Activated CD4-positive, alpha-beta T cell treated with anti-CD3 and anti-CD28 coated beads, Interleukin-2, amount 10 ng/mL, durations not matched to agents 24 days and 14 days (primary cell): ENCODE measurements at regions of chr14 and their contacts with region 1.

Region 1: DNA sequence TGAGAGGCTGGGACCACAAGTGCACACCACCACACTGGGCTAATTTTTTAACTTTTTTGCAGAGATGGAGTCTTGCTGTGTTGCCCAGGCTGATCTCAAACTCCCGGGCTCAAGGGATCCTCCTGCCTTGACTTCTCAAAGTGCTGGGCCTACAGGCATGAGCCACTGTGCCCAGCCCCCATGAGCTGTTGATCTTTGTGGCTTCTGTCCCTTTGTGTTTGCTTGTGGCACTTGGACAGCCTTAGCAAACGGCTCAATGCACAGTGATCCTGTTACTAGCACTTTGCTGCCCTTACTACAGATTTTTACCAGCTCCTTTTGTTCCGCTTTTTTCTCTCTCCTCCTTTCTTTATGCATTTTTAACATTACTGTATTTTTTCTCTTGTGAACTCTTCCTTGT is 25.3 kb upstream of the EVL start:
- DNase-seq: no peak
- H3K4me3 Mint-ChIP-seq: no peak overlapping the region
- H3K27ac Mint-ChIP-seq: no peak overlapping the region
- H3K4me1 Mint-ChIP-seq: peaks cover 7% of the 10 kb centered on the region
- H3K27me3 Mint-ChIP-seq: no peaks in the 10 kb centered on the region

Region 2: GRCh38 chr14:99989032-99989431 is 50.9 kb before region 1 on chr14:
- intact Hi-C with region 1: loop called (anchors 2 kb)
- DNase-seq: no peak
- H3K4me3 Mint-ChIP-seq: no peak overlapping the region
- H3K27ac Mint-ChIP-seq: no peak overlapping the region
- H3K4me1 Mint-ChIP-seq: no peaks in the 10 kb centered on the region
- H3K27me3 Mint-ChIP-seq: peaks cover 16% of the 10 kb centered on the region

Region 3: DNA sequence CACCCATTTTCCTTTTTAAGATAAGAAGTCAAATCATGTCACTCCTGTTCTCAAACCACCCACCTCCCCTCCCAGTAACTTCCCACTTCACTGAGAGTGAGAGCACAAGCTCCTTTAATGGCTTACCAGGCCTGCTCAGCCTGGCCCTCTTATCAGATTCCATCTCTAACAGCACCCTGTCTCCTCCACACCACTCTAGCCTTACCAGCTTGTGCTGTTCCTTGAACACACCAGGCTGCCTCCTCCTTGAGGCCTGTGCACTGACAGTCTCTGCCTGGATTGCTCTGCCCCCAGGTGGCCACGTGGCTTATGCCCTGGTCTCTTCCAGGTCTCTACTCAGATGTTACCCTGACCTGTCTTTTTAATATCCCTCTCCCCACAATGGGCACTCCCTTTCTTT is 14.8 kb before region 1 on chr14:
- intact Hi-C with region 1: no loop called
- DNase-seq: peak; percentile 74
- H3K4me3 Mint-ChIP-seq: no peak overlapping the region
- H3K27ac Mint-ChIP-seq: peak overlapping the region; percentile 28
- H3K4me1 Mint-ChIP-seq: peaks cover 15% of the 10 kb centered on the region
- H3K27me3 Mint-ChIP-seq: no peaks in the 10 kb centered on the region

Region 4: DNA sequence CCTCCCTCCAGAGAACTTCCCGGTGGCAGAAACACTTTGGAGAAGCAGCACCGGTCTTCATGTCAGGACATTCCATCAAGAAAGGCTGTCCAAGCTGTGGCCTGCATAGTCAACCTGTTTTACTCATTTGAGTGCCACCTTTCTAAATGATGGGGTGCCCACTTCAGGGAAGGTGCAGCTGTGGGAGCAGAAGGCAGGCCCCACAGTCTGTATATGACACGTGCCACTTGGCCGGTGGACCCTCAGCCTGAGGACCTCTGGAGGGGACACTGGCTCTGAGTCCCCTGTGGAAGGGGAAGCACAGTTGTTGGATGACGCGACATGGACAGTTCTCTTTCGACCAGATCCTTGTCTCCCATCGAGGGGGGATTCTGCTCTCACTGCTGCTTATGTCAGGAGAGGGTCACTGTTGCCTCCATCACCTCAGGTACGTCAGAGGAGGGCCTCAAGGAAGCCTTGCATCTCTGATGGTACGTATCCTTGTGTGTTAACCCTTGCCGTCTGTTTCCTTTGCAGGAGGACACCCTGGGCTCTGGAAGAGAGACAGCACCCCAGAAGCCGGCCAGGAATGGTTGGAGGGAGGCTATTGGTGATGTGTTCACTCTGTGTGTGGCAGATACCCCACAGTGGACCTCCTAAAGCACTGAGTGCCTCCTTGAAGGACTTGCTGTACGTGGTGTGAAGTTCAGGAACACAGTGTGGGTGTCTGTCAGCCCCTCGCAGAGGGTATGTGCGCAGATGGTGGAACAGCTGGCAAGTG is 995.7 kb after region 1 on chr14:
- intact Hi-C with region 1: no loop called
- DNase-seq: no peak
- H3K4me3 Mint-ChIP-seq: no peak overlapping the region
- H3K27ac Mint-ChIP-seq: no peak overlapping the region
- H3K4me1 Mint-ChIP-seq: no peaks in the 10 kb centered on the region
- H3K27me3 Mint-ChIP-seq: no peaks in the 10 kb centered on the region